Ascending aorta (tissue), 2 donors: ENCODE measurements at regions of chr1 and their contacts with region 1.

Region 1: GRCh38 chr1:207084701-207085180 is 3.9 kb upstream of the C4BPB start:
- DNase-seq: no peak
- H3K4me3 ChIP-seq: no peak overlapping the region
- H3K27ac ChIP-seq: no peak overlapping the region
- H3K4me1 ChIP-seq: peaks cover 0 to 2% of the 10 kb centered on the region in 2 donors
- H3K27me3 ChIP-seq: no peaks in the 10 kb centered on the region
- CTCF ChIP-seq: peak; percentile 34 to 56 (median 41)

Region 2: DNA sequence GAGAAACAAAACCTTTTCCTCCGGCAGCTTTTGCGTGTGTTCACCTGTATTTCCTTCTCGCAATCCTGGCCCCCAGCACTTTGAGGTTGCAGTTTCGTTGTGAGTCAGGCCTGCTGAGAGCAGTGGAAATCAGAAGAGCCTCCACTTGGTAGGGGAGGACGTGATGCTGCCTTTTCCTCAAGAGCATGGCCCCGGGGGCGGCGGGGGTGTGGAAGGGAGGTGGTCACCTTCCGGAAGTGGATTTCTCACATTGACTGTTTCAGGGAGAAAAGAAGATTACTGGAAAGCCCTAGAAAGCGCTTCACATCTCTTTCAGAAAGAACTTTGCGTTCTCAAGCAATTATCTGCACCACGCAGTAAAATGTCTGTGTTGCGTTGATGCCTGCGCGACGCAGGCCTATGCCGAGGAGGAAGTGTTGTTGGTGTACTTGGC is 300.3 kb before region 1 on chr1:
- intact Hi-C with region 1: no loop called
- DNase-seq: no peak
- H3K4me3 ChIP-seq: no peak overlapping the region
- H3K27ac ChIP-seq: no peak overlapping the region
- H3K4me1 ChIP-seq: no peaks in the 10 kb centered on the region
- H3K27me3 ChIP-seq: no peaks in the 10 kb centered on the region
- CTCF ChIP-seq: no peak

Region 3: GRCh38 chr1:207045466-207045865 is 39.3 kb before region 1 on chr1:
- intact Hi-C with region 1: loop called (anchors 2 kb)
- DNase-seq: no peak
- H3K4me3 ChIP-seq: no peak overlapping the region
- H3K27ac ChIP-seq: no peak overlapping the region
- H3K4me1 ChIP-seq: peaks cover 5 to 7% of the 10 kb centered on the region in 2 donors
- H3K27me3 ChIP-seq: no peaks in the 10 kb centered on the region
- CTCF ChIP-seq: no peak

Region 4: DNA sequence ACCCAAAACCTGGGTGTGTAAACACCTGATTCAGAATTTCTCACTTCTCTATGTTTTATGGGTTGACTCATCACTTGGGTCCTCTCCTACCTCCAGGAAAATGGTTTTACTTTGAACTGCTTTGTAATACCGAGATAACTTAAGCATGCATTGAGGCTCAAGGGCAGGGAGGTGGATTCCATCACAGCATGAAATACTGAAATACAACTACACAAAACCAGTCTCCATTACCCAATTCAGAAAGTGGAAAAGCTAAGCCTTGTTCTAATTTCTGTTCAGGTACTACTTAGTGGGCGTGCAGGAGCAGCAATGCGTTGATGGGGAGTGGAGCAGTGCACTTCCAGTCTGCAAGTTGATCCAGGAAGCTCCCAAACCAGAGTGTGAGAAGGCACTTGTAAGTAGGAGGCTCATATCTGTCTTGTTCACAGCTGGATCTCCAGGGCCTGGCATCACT is 13.2 kb after region 1 on chr1:
- intact Hi-C with region 1: no loop called
- DNase-seq: no peak
- H3K4me3 ChIP-seq: no peak overlapping the region
- H3K27ac ChIP-seq: no peak overlapping the region
- H3K4me1 ChIP-seq: no peaks in the 10 kb centered on the region
- H3K27me3 ChIP-seq: no peaks in the 10 kb centered on the region
- CTCF ChIP-seq: no peak

Region 5: DNA sequence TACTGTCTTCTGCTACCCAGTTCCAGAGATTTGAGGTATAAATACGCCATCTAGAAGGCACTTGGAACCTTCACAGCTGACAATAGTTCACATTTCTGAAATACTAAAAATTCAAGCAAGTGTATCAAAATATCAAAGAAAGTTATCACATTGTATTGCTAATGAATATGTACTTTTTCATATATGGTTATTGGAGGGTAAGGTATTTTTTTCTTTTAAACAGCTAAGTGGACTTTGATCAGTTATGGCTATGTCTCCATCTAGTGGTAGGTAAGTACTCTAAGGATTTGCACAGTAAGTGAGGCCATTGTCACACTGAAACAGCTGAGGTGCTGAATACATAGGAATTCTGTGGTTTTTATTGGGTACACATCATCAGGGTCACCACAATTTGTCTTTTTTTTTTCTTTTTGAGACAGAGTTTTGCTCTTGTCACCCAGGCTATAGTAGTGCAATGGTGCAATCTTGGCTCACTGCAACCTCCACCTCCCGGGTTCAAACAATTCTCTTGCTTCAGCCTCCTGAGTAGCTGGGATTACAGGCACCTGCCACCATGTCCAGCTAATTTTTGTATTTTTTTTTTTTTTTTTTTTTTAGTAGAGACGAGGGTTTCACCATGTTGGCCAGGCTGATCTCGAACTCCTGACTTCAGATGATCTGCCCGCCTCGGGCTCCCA is 320.2 kb after region 1 on chr1:
- intact Hi-C with region 1: loop called (anchors 2 kb)
- DNase-seq: no peak
- H3K4me3 ChIP-seq: no peak overlapping the region
- H3K27ac ChIP-seq: no peak overlapping the region
- H3K4me1 ChIP-seq: no peaks in the 10 kb centered on the region
- H3K27me3 ChIP-seq: no peaks in the 10 kb centered on the region
- CTCF ChIP-seq: peak; percentile 52 to 68 (median 64)